Vagina (tissue), 2 donors: ENCODE measurements at regions of chr10 and their contacts with region 1.

Region 1: GRCh38 chr10:111303887-111304286 is 227.1 kb downstream of the ADRA2A start:
- DNase-seq: no peak
- H3K4me3 ChIP-seq: no peak overlapping the region
- H3K27ac ChIP-seq: no peak overlapping the region
- H3K4me1 ChIP-seq: no peaks in the 10 kb centered on the region
- H3K27me3 ChIP-seq: no peaks in the 10 kb centered on the region
- CTCF ChIP-seq: no peak
- POLR2A ChIP-seq: no peak

Region 2: DNA sequence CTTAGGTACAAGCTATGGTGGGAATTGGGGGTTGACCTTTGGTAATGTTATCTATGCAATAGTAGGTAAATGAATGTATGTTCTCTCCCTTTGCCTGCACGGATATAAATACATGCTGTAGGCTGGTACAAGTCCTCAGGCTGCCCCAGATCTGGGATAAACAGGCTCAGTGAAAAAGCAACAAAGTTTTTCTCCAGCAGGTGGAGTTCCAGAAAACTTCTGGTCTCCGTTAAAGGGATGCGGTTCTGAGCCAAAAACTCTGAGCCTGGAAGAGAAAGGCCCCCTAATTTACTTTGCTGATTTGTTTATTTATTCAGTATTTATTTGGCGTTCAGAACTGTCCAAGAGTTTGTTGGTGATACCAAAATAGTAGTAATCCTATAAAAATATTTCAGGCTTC is 22.4 kb before region 1 on chr10:
- intact Hi-C with region 1: loop called (anchors 1 kb)
- DNase-seq: no peak
- H3K4me3 ChIP-seq: no peak overlapping the region
- H3K27ac ChIP-seq: peak overlapping the region; percentile 3
- H3K4me1 ChIP-seq: peaks cover 15% of the 10 kb centered on the region
- H3K27me3 ChIP-seq: no peaks in the 10 kb centered on the region
- CTCF ChIP-seq: no peak
- POLR2A ChIP-seq: no peak